Head of caudate nucleus (tissue), 42 donors: ENCODE measurements at regions of chr21 and their contacts with region 1.

Region 1: GRCh38 chr21:29073222-29074006 is at the start of gene CCT8:
- DNase-seq: peak; percentile 96 to 100 (median 99)

Region 2: DNA sequence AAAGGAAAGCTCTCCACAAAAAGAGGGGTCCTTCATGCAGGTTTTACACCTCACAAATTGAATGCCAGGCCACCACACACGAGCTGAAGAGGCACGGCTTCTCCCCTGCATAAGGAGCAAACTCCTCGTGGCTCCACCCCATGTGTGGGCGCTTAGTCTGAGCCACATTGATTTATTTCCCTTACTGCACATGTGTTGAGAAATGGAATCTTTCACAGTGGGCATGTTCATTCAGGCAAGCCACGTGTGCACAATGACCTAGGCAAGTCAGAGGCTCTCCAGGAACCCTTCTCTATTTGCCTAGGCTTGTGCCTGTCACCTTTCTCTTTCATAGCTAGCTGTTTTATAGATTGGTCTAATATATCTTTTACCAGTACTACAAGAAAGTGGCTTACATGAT is 201.2 kb before region 1 on chr21:
- intact Hi-C with region 1: no loop called
- DNase-seq: no peak

Region 3: GRCh38 chr21:29002442-29003144 is 70.8 kb before region 1 on chr21:
- intact Hi-C with region 1: loop called (anchors 5 kb)
- DNase-seq: peak; percentile 89 to 99 (median 98)

Region 4: GRCh38 chr21:29298348-29299045 is 225.1 kb after region 1 on chr21 and contains the start of gene BACH1:
- intact Hi-C with region 1: loop called (anchors 5 kb)
- DNase-seq: peak; percentile 48 to 95 (median 86)